ENCODE measurements at regions of chr19 and their contacts with region 1.

Region 1: GRCh38 chr19:47243776-47244547 is 12.4 kb upstream of the CCDC9 start:
- DNase-seq: peak; percentile 96
- ATAC-seq: peak; percentile 74
- H3K4me3 Mint-ChIP-seq: no peak overlapping the region
- H3K27ac Mint-ChIP-seq: peak overlapping the region; percentile 97
- H3K4me1 Mint-ChIP-seq: peaks cover 35% of the 10 kb centered on the region
- H3K27me3 Mint-ChIP-seq: peaks cover 2% of the 10 kb centered on the region

Region 2: DNA sequence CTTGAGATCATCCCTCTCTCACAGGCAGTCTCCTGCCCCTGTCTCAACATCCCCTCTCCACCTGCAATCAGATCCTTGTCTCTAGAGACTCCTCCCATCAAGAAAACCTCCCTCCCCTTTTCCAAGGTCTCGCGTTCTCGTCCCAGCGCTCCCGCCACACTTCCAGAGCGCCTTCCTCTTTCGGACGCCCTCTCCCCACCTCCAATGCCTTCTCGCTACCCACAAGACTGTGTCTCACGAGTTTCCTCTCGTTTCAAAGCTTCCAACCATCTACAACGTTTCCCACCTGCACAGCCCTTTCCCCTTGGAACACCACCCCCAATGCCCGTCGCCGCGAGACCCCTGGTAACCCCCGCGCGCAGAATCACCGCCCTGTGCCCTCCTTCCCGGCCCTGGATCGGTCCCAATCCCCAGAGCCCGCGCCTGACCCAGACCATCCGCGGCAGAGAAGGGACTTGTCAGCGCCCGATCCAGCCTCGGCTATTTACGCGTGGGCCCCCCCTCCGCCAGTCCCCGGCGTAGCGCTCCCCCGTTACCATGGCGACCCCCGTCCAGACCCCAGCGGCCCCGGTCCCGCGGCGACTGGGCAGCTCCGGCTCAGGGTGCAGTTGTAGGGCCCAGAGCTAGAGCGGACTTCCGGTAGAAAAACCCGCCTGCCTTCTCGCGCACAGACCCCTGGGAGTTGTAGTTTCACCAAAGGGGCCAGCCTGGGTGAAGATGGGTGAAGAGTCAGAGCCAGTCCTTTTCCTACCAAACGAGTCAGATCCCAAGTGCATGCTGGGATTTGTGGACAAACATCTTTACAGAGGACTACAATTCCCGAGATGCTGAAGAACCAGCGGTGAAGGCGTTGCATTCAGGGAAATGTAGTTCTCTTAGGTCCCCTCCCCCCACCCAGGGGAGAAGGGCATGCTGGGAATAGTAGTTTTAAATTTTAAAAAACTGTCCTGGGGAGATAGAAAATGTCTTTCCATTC is 393.4 kb before region 1 on chr19 and contains the start of gene AP2S1:
- CTCF ChIA-PET with region 1: no interaction called
- POLR2A ChIA-PET with region 1: no interaction called
- intact Hi-C with region 1: loop called in 1 of 2 experiments (anchors 10 kb)
- DNase-seq: peak; percentile 95
- ATAC-seq: peak; percentile 97
- H3K4me3 Mint-ChIP-seq: peak within 1 kb of the TSS; percentile 92
- H3K27ac Mint-ChIP-seq: peak within 1 kb of the TSS; percentile 64
- H3K4me1 Mint-ChIP-seq: peaks cover 21% of the 10 kb centered on the region
- H3K27me3 Mint-ChIP-seq: no peaks in the 10 kb centered on the region
- total RNA-seq, gene AP2S1: 102 to 104 TPM

Region 3: GRCh38 chr19:46932346-46932745 is 311.6 kb before region 1 on chr19:
- CTCF ChIA-PET with region 1: no interaction called
- POLR2A ChIA-PET with region 1: no interaction called
- intact Hi-C with region 1: no loop called
- DNase-seq: no peak
- ATAC-seq: no peak
- H3K4me3 Mint-ChIP-seq: no peak overlapping the region
- H3K27ac Mint-ChIP-seq: no peak overlapping the region
- H3K4me1 Mint-ChIP-seq: peaks cover 56% of the 10 kb centered on the region
- H3K27me3 Mint-ChIP-seq: no peaks in the 10 kb centered on the region

Region 4: DNA sequence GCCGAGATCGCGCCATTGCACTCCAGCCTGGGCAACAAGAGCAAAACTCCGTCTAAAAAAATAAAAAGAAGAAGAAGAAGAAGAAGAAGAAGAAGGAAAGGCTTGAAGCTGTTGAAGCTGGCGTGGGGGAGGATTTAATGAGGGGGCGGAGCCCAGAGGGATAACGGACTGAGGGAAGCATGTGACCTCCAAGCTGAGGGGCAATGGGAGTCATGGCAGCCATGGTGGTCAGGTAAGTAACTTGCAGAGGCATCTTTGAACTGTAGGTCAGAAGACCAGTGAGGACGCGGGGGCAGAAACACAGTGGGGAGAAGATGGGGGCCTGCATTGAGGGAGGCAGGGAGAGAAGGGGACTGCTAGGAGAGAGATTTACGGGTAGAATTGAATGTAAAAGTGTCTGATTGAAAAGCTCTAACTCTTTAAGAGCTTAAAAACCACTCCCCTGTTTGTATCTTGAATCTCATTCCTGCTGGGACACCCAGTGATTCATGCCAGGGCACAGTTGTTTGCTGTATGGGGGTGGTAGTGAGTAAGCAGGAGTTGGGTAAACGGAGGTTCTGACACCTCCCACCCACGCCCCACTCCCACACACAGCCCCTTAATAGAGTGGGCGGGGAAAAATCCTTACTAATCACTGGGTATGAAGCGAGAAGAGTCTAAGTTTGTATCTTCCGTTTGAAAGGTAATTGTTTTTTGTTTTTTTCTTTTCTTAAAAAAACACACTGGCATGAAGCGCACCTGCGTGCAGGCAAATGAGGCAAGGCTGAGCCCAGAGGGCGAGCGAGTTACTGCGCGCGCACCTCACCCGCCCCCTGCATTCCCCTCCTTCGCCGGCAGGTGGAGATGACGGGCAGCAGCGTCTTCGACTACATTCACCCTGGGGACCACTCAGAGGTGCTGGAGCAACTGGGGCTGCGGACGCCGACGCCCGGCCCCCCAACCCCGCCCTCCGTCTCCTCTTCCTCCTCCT is 208.6 kb before region 1 on chr19:
- CTCF ChIA-PET with region 1: interaction called, 7 read pairs
- POLR2A ChIA-PET with region 1: no interaction called
- intact Hi-C with region 1: loop called (anchors 2 to 10 kb)
- DNase-seq: peak; percentile 96
- ATAC-seq: peak; percentile 93
- H3K4me3 Mint-ChIP-seq: peak overlapping the region; percentile 73
- H3K27ac Mint-ChIP-seq: peak overlapping the region; percentile 80
- H3K4me1 Mint-ChIP-seq: peaks cover 22% of the 10 kb centered on the region
- H3K27me3 Mint-ChIP-seq: peaks cover 4% of the 10 kb centered on the region

Region 5: GRCh38 chr19:47130591-47131227 is 113.3 kb before region 1 on chr19 and contains the start of gene SAE1:
- CTCF ChIA-PET with region 1: interaction called, 28 read pairs
- POLR2A ChIA-PET with region 1: interaction called, 3 read pairs
- intact Hi-C with region 1: loop called in 1 of 2 experiments (anchors 1 kb)
- DNase-seq: peak; percentile 95
- ATAC-seq: peak; percentile 89
- H3K4me3 Mint-ChIP-seq: peak within 1 kb of the TSS; percentile 99
- H3K27ac Mint-ChIP-seq: peak within 1 kb of the TSS; percentile 97
- H3K4me1 Mint-ChIP-seq: peaks cover 41% of the 10 kb centered on the region
- H3K27me3 Mint-ChIP-seq: no peaks in the 10 kb centered on the region
- total RNA-seq, gene SAE1: 143 to 156 TPM

Region 6: DNA sequence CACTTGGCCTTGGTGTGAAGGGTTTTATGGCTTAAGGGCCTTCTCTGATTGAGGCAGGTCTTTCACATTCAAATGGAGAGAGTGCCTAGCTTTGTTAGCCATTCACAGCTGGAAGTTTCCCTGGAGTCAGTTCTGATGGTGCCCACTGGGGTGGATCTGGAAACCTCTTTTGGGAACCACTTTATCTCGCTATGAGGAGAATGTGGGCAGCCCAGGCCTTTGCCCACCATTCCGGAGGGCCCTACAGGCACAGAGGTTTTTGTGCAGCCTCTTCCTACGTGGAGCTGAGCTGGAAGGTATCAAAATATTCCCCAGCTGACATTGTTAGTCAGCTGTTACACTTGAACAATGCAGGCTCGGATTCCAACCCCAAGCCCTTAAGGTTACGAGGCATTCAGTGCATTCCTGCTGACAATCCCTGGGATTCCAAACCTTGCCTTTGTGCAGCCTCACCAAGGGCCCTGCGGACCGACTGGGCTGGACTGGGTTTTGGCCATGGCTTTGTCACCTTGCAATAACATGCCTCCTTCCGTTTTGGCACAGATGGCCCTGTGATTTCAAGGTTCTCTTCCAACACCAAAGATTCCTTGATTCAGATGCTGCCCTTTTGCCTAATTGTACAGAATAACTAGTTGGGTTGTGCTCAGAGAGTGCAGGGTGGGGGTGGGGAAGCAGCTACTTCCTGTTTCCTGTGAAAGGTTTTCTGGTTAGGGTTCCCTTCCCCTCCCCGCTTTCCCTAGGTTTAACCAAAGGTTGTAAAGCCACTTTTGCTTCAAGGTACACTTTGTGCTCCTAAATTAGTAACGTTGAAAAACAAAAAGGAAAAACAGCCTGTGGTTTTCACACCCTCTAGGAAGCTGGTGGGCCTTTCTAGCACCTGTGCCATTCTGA is 86.3 kb before region 1 on chr19:
- CTCF ChIA-PET with region 1: interaction called, 40 read pairs
- POLR2A ChIA-PET with region 1: interaction called, 11 read pairs
- intact Hi-C with region 1: no loop called
- DNase-seq: peak; percentile 54
- ATAC-seq: no peak
- H3K4me3 Mint-ChIP-seq: peak overlapping the region; percentile 58
- H3K27ac Mint-ChIP-seq: peak overlapping the region; percentile 93
- H3K4me1 Mint-ChIP-seq: peaks cover 75% of the 10 kb centered on the region
- H3K27me3 Mint-ChIP-seq: no peaks in the 10 kb centered on the region

Region 7: GRCh38 chr19:47210689-47211316 is 33.2 kb before region 1 on chr19:
- CTCF ChIA-PET with region 1: interaction called, 205 read pairs
- POLR2A ChIA-PET with region 1: interaction called, 16 read pairs
- intact Hi-C with region 1: loop called (anchors 1 kb)
- DNase-seq: peak; percentile 89
- ATAC-seq: peak; percentile 87
- H3K4me3 Mint-ChIP-seq: no peak overlapping the region
- H3K27ac Mint-ChIP-seq: peak overlapping the region; percentile 91
- H3K4me1 Mint-ChIP-seq: peaks cover 9% of the 10 kb centered on the region
- H3K27me3 Mint-ChIP-seq: no peaks in the 10 kb centered on the region

Region 8: DNA sequence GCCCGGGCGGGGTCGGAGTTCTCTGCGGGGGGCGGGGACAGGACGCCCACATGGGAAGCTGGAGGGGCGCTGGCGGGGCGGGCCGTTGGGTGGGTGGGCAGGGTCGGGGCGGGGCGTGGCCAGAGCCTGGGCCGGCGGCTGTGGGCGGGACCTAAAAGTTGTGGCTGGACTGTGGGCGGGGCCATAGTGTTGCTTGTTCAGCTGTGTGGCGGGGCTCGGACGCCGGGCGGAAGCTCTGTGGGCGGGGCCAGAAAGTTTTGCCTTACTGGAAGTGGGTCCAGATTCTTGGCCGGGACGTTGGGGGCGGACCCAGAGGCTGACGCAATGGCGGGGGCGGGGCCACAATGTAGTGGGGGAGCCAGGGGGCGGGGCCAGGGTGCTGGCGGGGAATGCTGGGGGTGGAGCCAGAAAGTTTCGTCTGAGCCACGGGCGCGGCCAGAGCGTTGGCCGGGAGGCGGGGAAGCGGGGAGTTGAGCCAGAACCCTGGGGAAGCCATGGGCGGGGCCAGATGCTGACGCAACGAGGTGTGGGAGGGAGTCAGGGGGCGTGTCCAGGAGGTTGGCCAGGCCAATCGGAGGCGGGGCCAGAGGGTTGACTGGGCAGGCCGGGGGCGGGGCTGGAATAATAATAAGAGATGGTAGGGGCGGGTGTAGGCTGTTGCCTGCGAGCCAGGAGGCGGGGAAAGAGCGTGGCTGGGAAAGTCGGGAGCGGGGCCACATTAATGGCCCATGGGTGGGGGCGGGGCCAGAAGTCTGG is 12.9 kb after region 1 on chr19:
- CTCF ChIA-PET with region 1: interaction called, 29 read pairs
- POLR2A ChIA-PET with region 1: interaction called, 10 read pairs
- intact Hi-C with region 1: loop called in 1 of 2 experiments (anchors 1 kb)
- DNase-seq: peak; percentile 100
- ATAC-seq: peak; percentile 86
- H3K4me3 Mint-ChIP-seq: peak overlapping the region; percentile 90
- H3K27ac Mint-ChIP-seq: peak overlapping the region; percentile 93
- H3K4me1 Mint-ChIP-seq: peaks cover 31% of the 10 kb centered on the region
- H3K27me3 Mint-ChIP-seq: no peaks in the 10 kb centered on the region

Region 9: DNA sequence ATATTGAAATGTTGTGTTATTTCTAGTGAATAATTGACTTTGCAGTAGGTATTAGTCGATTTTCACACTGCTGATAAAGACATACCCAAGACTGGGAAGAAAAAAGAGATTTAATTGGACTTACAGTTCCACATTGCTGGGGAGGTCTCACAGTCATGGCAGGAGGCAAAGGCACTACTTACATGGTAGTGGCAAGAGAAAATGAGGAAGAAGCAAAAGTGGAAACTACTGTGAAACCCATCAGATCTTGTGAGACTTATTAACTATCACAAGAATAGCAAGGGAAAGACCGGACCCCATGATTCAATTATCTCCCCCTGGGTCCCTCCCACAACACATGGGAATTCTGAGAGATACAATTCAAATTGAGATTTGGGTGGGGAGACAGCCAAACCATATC is 78.1 kb after region 1 on chr19:
- CTCF ChIA-PET with region 1: no interaction called
- POLR2A ChIA-PET with region 1: no interaction called
- intact Hi-C with region 1: no loop called
- DNase-seq: no peak
- ATAC-seq: no peak
- H3K4me3 Mint-ChIP-seq: no peak overlapping the region
- H3K27ac Mint-ChIP-seq: no peak overlapping the region
- H3K4me1 Mint-ChIP-seq: no peaks in the 10 kb centered on the region
- H3K27me3 Mint-ChIP-seq: peaks cover 14% of the 10 kb centered on the region